ENCODE measurements at regions of chr12 and their contacts with region 1.

Region 1: DNA sequence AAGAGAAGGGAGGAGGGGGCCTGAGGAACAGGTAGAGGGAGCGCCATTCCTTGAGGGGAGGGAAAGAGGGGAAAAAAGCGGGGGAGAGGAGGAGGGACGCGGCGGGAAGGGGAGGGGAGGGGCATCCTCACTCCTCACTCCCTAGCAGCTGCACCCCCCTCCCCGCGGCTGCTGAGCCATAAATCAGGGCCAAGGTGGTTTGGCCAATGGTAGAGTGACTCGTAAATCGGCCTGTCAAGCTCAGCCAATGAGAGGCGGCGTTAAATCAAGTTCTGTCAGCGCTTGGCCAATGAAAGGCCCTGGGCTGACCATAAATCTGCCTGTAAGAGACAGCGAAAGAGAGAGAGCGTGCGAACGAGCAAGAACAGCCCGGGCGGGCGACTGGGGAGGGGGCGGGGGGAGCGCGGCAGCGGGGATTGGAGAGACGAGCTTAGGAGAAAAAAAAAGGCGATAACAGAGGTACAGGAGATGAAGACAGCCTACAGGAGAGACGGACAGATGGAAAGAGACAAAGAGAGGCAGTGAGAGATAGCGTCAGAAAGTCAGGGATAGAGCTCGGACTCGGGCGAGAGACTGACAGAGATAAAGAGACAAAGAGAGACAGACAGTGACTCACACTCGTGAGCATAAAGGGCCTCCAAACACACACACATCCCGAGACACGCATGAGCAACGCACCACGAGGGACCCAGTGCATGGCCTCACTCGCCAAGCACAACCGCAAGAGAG is 5.1 kb downstream of the GPR84 start:
- DNase-seq: peak; percentile 99
- H3K4me3 ChIP-seq: peak overlapping the region; percentile 74
- H3K27ac ChIP-seq: peak overlapping the region; percentile 68
- H3K4me1 ChIP-seq: peaks cover 46% of the 10 kb centered on the region
- CTCF ChIP-seq: no peak

Region 2: DNA sequence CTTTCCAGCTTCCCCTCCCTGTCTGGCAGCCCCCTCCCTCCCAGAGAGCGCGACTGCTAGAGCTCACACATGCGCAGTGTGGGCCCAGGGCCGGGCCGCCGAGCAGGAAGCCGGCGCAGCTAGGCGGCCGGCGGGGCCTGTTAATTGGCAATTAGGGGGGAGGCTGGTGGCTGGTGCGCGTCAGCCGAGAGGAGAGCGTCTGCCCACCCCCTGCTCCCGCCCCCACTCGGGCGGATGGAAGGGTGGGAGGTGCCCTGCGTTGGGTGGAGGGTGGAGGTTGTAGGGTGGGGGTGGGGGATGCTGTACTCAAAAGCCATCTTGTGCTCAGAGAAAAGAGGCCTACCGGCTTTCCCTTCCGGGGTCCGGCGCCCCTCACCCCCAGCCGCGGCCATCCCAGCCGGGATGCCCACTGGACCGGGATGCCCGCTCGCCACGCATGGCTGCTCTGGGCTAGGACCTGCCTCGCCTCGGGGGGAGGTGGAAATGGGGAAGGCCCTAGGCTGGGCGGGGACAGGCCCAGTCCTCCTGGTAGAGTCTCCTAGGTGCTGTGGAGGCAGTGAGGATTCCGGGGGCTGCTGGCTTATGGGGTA is 341.2 kb before region 1 on chr12:
- CTCF ChIA-PET with region 1: no interaction called
- POLR2A ChIA-PET with region 1: interaction called, 4 read pairs
- intact Hi-C with region 1: loop called (anchors 10 kb)
- DNase-seq: peak; percentile 98
- H3K4me3 ChIP-seq: peak overlapping the region; percentile 77
- H3K27ac ChIP-seq: peak overlapping the region; percentile 83
- H3K4me1 ChIP-seq: peaks cover 49% of the 10 kb centered on the region
- CTCF ChIP-seq: no peak

Region 3: DNA sequence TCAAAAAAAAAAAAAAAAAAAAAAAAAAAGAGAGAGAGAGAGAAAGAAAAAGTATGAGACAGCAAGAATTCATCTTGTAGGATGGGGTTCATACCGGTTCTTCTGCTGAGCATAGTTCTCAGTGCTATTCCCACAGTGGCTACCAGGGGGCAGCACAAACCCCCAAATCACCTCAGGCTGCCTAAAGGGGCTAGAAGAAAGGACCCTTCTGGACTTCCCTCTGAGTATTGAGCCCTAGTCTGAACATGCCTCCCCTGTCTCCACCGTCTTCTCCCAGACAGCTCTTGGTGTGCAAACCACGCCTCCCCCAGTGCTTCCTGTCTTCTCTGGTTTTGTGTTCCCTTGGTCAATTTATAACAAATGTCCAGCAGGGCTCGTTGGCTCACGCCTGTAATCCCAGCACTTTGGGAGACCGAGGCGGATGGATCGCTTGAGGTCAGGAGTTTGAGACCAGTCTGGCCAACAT is 139.1 kb before region 1 on chr12:
- CTCF ChIA-PET with region 1: interaction called, 4 read pairs
- POLR2A ChIA-PET with region 1: interaction called, 6 read pairs
- intact Hi-C with region 1: loop called (anchors 1 kb)
- DNase-seq: peak; percentile 81
- H3K4me3 ChIP-seq: no peak overlapping the region
- H3K27ac ChIP-seq: no peak overlapping the region
- H3K4me1 ChIP-seq: peaks cover 45% of the 10 kb centered on the region
- CTCF ChIP-seq: peak; percentile 83

Region 4: GRCh38 chr12:54285150-54286041 is 73.8 kb before region 1 on chr12:
- CTCF ChIA-PET with region 1: interaction called, 6 read pairs
- POLR2A ChIA-PET with region 1: interaction called, 6 read pairs
- intact Hi-C with region 1: loop called (anchors 2 kb)
- DNase-seq: no peak
- H3K4me3 ChIP-seq: peak overlapping the region; percentile 36
- H3K27ac ChIP-seq: peak overlapping the region; percentile 16
- H3K4me1 ChIP-seq: peaks cover 52% of the 10 kb centered on the region
- CTCF ChIP-seq: peak; percentile 69

Region 5: GRCh38 chr12:54324617-54325441 is 34.4 kb before region 1 on chr12 and contains the start of gene COPZ1:
- CTCF ChIA-PET with region 1: interaction called, 5 read pairs
- POLR2A ChIA-PET with region 1: interaction called, 4 read pairs
- intact Hi-C with region 1: loop called (anchors 1 kb)
- DNase-seq: peak; percentile 99
- H3K4me3 ChIP-seq: peak within 1 kb of the TSS; percentile 72
- H3K27ac ChIP-seq: peak within 1 kb of the TSS; percentile 1
- H3K4me1 ChIP-seq: peaks cover 5% of the 10 kb centered on the region
- CTCF ChIP-seq: peak; percentile 94
- total RNA-seq, gene COPZ1: 77.5 and 86.0 TPM in 2 replicates